AG04450 (cell line): ENCODE measurements at regions of chr11 and their contacts with region 1.

Region 1: DNA sequence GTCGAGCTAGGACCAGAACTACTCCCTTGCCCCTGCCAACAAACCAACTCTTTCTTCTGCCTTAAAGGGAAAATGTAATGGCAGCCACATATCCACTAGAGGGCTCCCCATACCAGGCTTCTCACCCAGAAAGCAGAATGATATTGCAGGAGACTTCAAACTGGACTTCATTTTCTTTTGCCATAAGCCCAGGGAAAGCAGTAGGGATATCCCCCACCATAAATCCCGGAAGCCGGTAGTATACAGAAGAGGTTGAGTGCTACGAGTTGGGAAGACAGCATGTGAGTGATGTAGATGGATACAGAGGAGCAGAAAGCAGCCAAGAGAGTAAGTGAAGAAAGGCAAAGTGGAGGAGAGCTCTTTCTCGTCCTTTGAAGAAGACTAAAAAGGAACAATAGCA is 12.1 kb downstream of the PLAAT5 start:
- DNase-seq: peak; percentile 53
- H3K4me3 ChIP-seq: no peak overlapping the region
- H3K27ac ChIP-seq: no peak overlapping the region
- H3K27me3 ChIP-seq: no peaks in the 10 kb centered on the region
- CTCF ChIP-seq: peak; percentile 96

Region 2: DNA sequence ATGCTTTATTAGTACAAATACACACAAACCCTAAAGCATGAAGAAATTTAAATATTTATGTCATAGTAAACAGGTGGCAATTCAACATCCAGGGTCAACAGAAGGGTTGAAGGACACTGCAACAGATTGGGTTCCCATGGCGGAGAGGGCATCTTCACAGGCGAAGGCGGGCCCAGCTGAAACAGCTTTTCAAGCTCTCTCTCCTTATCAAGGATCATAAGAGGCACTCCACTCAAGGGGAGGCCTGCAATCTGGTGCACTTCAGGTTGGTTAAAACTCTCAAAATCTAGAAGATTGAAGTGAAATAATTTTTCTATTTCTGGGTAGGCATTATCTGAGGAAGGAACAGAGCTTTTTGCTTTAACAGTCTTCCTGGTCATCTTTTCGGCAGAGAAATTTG is 446.4 kb before region 1 on chr11:
- CTCF ChIA-PET with region 1: no interaction called
- POLR2A ChIA-PET with region 1: no interaction called
- DNase-seq: no peak
- H3K4me3 ChIP-seq: no peak overlapping the region
- H3K27ac ChIP-seq: no peak overlapping the region
- H3K27me3 ChIP-seq: peaks cover 11% of the 10 kb centered on the region
- CTCF ChIP-seq: no peak

Region 3: DNA sequence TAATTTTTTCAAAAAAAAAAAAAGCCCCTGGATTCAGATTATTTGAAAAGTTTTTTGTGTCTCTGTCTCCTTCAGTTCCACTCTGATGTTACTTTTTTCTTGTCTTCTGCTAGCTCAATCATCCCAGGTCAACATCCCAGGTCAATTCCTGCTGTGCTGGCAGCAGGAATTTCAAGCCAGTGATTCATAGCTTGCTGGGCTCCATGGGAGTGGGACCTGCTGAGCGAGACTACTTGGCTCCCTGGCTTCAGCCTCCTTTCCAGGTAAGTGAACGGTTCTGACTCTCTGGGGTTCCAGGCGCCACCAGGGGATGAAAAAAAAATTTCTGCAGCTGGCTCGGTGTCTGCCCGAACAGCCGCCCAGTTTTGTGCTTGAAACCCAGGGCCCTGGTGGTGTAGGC is 19.3 kb before region 1 on chr11:
- CTCF ChIA-PET with region 1: no interaction called
- POLR2A ChIA-PET with region 1: no interaction called
- DNase-seq: no peak
- H3K4me3 ChIP-seq: no peak overlapping the region
- H3K27ac ChIP-seq: no peak overlapping the region
- H3K27me3 ChIP-seq: peaks cover 2% of the 10 kb centered on the region
- CTCF ChIP-seq: no peak

Region 4: GRCh38 chr11:63490551-63491239 is 11.8 kb after region 1 on chr11 and contains the start of gene PLAAT5:
- CTCF ChIA-PET with region 1: interaction called, 13 read pairs
- POLR2A ChIA-PET with region 1: no interaction called
- DNase-seq: no peak
- H3K4me3 ChIP-seq: no peak within 1 kb of the TSS
- H3K27ac ChIP-seq: no peak within 1 kb of the TSS
- H3K27me3 ChIP-seq: peaks cover 33% of the 10 kb centered on the region
- CTCF ChIP-seq: no peak
- polyA plus RNA-seq, gene PLAAT5: not detected in 2 replicates

Region 5: GRCh38 chr11:63599211-63600122 is 120.6 kb after region 1 on chr11:
- CTCF ChIA-PET with region 1: interaction called, 10 read pairs
- POLR2A ChIA-PET with region 1: no interaction called
- DNase-seq: no peak
- H3K4me3 ChIP-seq: no peak overlapping the region
- H3K27ac ChIP-seq: no peak overlapping the region
- H3K27me3 ChIP-seq: no peaks in the 10 kb centered on the region
- CTCF ChIP-seq: no peak

Region 6: DNA sequence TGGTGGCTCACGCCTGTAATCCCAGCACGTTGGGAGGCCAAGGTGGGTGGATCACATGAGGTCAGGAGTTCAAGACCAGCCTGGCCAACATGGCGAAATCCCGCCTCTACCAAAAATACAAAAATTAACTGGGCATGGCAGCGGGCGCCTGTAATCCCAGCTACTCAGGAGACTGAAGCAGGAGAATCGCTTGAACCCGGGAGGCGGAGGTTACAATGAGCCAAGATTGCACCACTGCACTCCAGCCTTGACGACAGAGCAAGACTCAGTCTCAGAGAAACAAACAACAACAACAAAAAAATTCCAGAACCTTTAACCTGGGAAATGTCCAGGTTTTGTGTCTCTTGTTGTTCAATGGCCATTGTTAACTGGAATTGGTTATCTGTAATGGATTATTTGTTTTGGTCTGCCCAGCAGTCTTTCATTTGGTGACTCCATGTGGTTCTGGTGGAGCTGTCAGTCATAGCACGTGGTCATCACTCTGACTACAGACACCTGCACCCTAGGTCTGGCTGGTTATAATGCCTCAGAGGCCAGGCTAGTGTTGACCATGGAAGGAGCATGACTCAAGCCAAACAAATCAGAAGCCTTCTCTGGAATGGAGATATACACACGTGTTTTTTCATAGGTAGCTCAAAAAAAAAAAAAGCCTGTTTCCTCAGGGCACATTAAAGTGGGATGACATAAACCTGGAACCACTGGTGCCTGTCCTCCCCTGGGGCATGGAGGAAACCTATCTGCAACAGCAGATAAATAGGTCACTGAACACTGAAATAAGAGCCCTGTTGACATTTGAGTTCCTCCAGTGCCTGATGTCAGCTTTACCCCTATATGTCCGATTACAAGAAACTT is 143.3 kb after region 1 on chr11:
- CTCF ChIA-PET with region 1: interaction called, 33 read pairs
- POLR2A ChIA-PET with region 1: interaction called, 3 read pairs
- DNase-seq: no peak
- H3K4me3 ChIP-seq: no peak overlapping the region
- H3K27ac ChIP-seq: no peak overlapping the region
- H3K27me3 ChIP-seq: no peaks in the 10 kb centered on the region
- CTCF ChIP-seq: no peak

Region 7: GRCh38 chr11:63629426-63629825 is 150.5 kb after region 1 on chr11:
- CTCF ChIA-PET with region 1: interaction called, 185 read pairs
- POLR2A ChIA-PET with region 1: no interaction called
- DNase-seq: no peak
- H3K4me3 ChIP-seq: no peak overlapping the region
- H3K27ac ChIP-seq: no peak overlapping the region
- H3K27me3 ChIP-seq: no peaks in the 10 kb centered on the region
- CTCF ChIP-seq: no peak

Region 8: GRCh38 chr11:63635762-63636465 is 157.0 kb after region 1 on chr11:
- CTCF ChIA-PET with region 1: interaction called, 185 read pairs
- POLR2A ChIA-PET with region 1: no interaction called
- DNase-seq: peak; percentile 27
- H3K4me3 ChIP-seq: no peak overlapping the region
- H3K27ac ChIP-seq: no peak overlapping the region
- H3K27me3 ChIP-seq: no peaks in the 10 kb centered on the region
- CTCF ChIP-seq: peak; percentile 89